ENCODE measurements at regions of chr21 and their contacts with region 1.

Region 1: DNA sequence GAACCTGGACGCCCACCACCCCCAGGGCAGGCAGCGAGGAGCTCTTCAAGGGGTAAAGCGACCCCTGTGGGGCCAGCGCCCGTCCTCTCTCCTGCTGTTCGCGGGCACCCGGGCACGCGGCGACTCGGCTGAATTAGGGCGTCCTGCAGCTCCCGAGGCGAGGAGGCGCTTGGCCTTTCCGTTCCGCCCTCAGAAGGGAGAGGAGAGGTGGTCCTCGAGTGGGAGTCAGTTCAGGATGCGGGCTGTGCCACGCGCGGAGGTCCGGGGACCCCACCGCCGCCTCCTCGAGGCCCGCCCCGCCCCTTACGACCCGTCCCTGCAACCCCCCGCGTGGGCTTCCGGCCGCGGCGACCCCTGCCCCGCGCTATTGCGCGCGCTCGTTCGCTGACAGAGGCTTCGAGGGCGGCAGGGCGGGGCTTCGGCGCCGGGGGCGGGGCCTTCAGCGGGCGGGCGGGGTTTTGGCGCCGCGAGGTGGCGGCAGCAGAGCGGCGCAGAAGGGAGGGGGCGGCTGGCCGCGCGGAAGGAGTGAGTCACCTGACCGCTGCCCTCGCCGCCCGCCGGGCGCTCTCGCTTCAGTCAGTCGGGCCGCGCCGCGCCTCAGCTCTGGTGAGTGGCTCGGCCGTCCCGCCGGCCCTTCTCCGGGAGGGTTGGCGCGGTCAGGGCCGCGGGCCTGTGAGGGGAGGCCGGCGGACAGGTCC is at the start of gene BACH1:
- H3K4me3 Mint-ChIP-seq: peak within 1 kb of the TSS; percentile 90
- H3K27ac Mint-ChIP-seq: peak within 1 kb of the TSS; percentile 97
- H3K4me1 Mint-ChIP-seq: peaks cover 61% of the 10 kb centered on the region
- H3K27me3 Mint-ChIP-seq: no peaks in the 10 kb centered on the region

Region 2: DNA sequence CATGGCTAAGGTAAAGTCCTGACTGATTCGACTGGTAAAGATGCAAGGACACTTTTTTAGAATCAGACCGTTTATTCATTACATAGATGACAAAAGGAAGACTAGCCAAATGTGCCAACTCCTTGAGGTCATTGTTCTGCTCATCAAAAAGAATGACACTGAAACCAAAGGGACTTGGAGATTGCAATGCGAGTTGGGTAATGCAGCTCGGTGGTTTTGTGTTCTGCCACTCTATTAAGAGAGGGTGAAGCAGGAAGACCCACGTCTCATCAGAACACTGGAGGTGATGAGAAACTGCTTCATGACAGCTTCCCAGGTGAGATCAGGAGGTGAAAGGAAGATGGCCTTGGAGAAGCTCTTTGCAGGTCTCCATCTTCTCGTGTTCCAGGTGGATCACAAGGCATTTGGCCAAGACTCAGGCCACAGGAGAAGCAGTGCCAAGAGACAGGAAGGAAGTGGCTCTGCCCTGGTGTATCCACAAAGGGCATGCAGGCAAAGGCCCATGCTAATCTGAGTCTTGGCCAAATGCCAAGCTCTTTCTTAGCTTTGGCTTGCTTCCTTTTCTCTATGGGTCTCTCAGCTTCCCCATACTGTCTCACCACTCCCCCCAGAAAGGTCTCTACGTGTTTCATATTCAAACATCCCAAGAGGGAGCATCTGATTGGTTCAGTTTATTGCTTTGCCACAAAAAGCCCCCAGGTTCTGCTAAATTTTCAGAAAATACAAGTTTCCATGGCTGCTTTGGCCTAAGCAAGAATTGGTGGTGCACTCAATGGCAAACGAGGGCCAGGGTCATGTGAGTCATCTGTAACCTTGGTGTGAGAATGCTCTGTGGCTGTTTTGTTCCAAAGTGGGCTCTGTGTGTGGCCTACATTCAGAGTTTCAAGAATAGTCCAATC is 219.4 kb before region 1 on chr21:
- intact Hi-C with region 1: loop called (anchors 5 kb)
- H3K4me3 Mint-ChIP-seq: no peak overlapping the region
- H3K27ac Mint-ChIP-seq: peak overlapping the region; percentile 89
- H3K4me1 Mint-ChIP-seq: peaks cover 38% of the 10 kb centered on the region
- H3K27me3 Mint-ChIP-seq: no peaks in the 10 kb centered on the region

Region 3: DNA sequence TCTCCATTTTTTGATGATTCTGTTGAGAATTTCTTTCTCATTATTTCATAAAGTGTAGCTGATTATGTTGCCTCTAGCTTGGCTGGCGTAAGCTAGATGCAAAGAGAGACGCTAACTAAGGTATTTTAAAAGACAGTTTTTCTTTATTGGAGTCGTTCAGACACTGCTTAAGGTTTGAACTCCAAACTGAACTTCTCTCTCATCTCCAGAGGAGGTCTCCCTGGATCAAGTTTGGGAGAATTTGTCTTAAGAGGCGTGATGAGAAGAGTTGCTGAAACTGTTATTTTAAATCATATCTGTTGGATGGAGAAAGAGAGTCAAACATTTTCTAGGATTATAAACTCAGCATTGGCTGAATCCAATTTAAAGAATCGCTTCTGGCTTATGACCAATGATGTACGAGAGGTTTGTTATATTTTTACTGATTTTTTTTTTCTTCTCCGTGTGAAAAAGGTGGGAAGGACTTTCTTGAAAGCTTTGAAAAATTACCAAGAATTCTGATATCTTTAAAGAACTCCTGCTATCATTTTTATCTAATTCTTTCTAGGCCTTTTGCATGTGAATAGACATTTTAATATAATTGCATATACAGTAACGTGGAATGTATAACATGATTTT is 134.1 kb before region 1 on chr21:
- intact Hi-C with region 1: loop called (anchors 5 kb)
- H3K4me3 Mint-ChIP-seq: no peak overlapping the region
- H3K27ac Mint-ChIP-seq: peak overlapping the region; percentile 96
- H3K4me1 Mint-ChIP-seq: peaks cover 56% of the 10 kb centered on the region
- H3K27me3 Mint-ChIP-seq: no peaks in the 10 kb centered on the region

Region 4: GRCh38 chr21:29195981-29196669 is 102.4 kb before region 1 on chr21:
- intact Hi-C with region 1: loop called (anchors 1 kb)
- H3K4me3 Mint-ChIP-seq: peak overlapping the region; percentile 77
- H3K27ac Mint-ChIP-seq: peak overlapping the region; percentile 95
- H3K4me1 Mint-ChIP-seq: peaks cover 47% of the 10 kb centered on the region
- H3K27me3 Mint-ChIP-seq: no peaks in the 10 kb centered on the region

Region 5: GRCh38 chr21:29232601-29233546 is 65.6 kb before region 1 on chr21:
- intact Hi-C with region 1: loop called (anchors 5 kb)
- H3K4me3 Mint-ChIP-seq: peak overlapping the region; percentile 15
- H3K27ac Mint-ChIP-seq: peak overlapping the region; percentile 70
- H3K4me1 Mint-ChIP-seq: peaks cover 79% of the 10 kb centered on the region
- H3K27me3 Mint-ChIP-seq: no peaks in the 10 kb centered on the region

Region 6: GRCh38 chr21:29347274-29347681 is 48.8 kb after region 1 on chr21:
- intact Hi-C with region 1: loop called (anchors 5 kb)
- H3K4me3 Mint-ChIP-seq: no peak overlapping the region
- H3K27ac Mint-ChIP-seq: peak overlapping the region; percentile 73
- H3K4me1 Mint-ChIP-seq: peaks cover 45% of the 10 kb centered on the region
- H3K27me3 Mint-ChIP-seq: no peaks in the 10 kb centered on the region